T-cell (primary cell): ENCODE measurements at regions of chr22 and their contacts with region 1.

Region 1: GRCh38 chr22:24529898-24530297 is 25.0 kb downstream of the GUCD1 start:
- DNase-seq: no peak
- ATAC-seq: no peak
- H3K4me3 ChIP-seq: no peak overlapping the region
- H3K4me3 Mint-ChIP-seq: no peak overlapping the region
- H3K27ac ChIP-seq: no peak overlapping the region
- H3K27ac Mint-ChIP-seq: no peak overlapping the region
- H3K4me1 ChIP-seq: peaks cover 0 to 6% of the 10 kb centered on the region in 2 experiments
- H3K4me1 Mint-ChIP-seq: peaks cover 4 to 5% (median 5%) of the 10 kb centered on the region in 3 donors
- H3K27me3 ChIP-seq: peaks cover 0 to 4% of the 10 kb centered on the region in 2 experiments
- H3K27me3 Mint-ChIP-seq: no peaks in the 10 kb centered on the region

Region 2: GRCh38 chr22:24333301-24333700 is 196.6 kb before region 1 on chr22:
- CTCF ChIA-PET with region 1: interaction called in 1 of 2 experiments, 10 read pairs
- POLR2A ChIA-PET with region 1: no interaction called
- DNase-seq: no peak
- ATAC-seq: no peak
- H3K4me3 ChIP-seq: no peak overlapping the region
- H3K4me3 Mint-ChIP-seq: no peak overlapping the region
- H3K27ac ChIP-seq: no peak overlapping the region
- H3K27ac Mint-ChIP-seq: no peak overlapping the region
- H3K4me1 ChIP-seq: peaks cover 4 to 13% of the 10 kb centered on the region in 2 experiments
- H3K4me1 Mint-ChIP-seq: peaks cover 20 to 23% (median 22%) of the 10 kb centered on the region in 3 donors
- H3K27me3 ChIP-seq: no peaks in the 10 kb centered on the region
- H3K27me3 Mint-ChIP-seq: no peaks in the 10 kb centered on the region

Region 3: GRCh38 chr22:24894220-24894975 is 364.5 kb after region 1 on chr22:
- CTCF ChIA-PET with region 1: no interaction called
- POLR2A ChIA-PET with region 1: no interaction called
- DNase-seq: no peak
- ATAC-seq: no peak
- H3K4me3 ChIP-seq: no peak overlapping the region
- H3K4me3 Mint-ChIP-seq: no peak overlapping the region
- H3K27ac ChIP-seq: no peak overlapping the region
- H3K27ac Mint-ChIP-seq: no peak overlapping the region
- H3K4me1 ChIP-seq: no peaks in the 10 kb centered on the region
- H3K4me1 Mint-ChIP-seq: peaks cover 0 to 5% (median 0%) of the 10 kb centered on the region in 3 donors
- H3K27me3 ChIP-seq: peaks cover 0 to 3% of the 10 kb centered on the region in 2 experiments
- H3K27me3 Mint-ChIP-seq: peaks cover 0 to 7% of the 10 kb centered on the region in 2 donors